ENCODE measurements at regions of chr12 and their contacts with region 1.

Region 1: GRCh38 chr12:28023156-28023887 is 50.8 kb upstream of the PTHLH start:
- DNase-seq: peak; percentile 97
- H3K4me3 ChIP-seq: no peak overlapping the region
- H3K27ac ChIP-seq: peak overlapping the region; percentile 100
- H3K4me1 ChIP-seq: peaks cover 64% of the 10 kb centered on the region
- H3K27me3 ChIP-seq: no peaks in the 10 kb centered on the region
- CTCF ChIP-seq: no peak

Region 2: GRCh38 chr12:27969624-27970400 is 53.5 kb before region 1 on chr12:
- CTCF ChIA-PET with region 1: no interaction called
- dilution Hi-C with region 1: loop called (anchors 5 kb)
- in situ Hi-C with region 1: loop called in 1 of 2 experiments (anchors 5 kb)
- intact Hi-C with region 1: loop called (anchors 1 kb)
- DNase-seq: peak; percentile 95
- H3K4me3 ChIP-seq: peak overlapping the region; percentile 76 to 95 (median 91)
- H3K27ac ChIP-seq: peak overlapping the region; percentile 100
- H3K4me1 ChIP-seq: peaks cover 42% of the 10 kb centered on the region
- H3K27me3 ChIP-seq: no peaks in the 10 kb centered on the region
- CTCF ChIP-seq: peak in 1 of 2 donors; percentile 53

Region 3: GRCh38 chr12:27981873-27982272 is 41.4 kb before region 1 on chr12:
- CTCF ChIA-PET with region 1: no interaction called
- dilution Hi-C with region 1: loop called (anchors 5 kb)
- in situ Hi-C with region 1: no loop called
- intact Hi-C with region 1: loop called (anchors 1 kb)
- DNase-seq: peak; percentile 98
- H3K4me3 ChIP-seq: no peak overlapping the region
- H3K27ac ChIP-seq: peak overlapping the region; percentile 98
- H3K4me1 ChIP-seq: peaks cover 28% of the 10 kb centered on the region
- H3K27me3 ChIP-seq: no peaks in the 10 kb centered on the region
- CTCF ChIP-seq: no peak

Region 4: GRCh38 chr12:28035500-28035899 is 12.2 kb after region 1 on chr12:
- CTCF ChIA-PET with region 1: no interaction called
- dilution Hi-C with region 1: no loop called
- in situ Hi-C with region 1: no loop called
- intact Hi-C with region 1: loop called (anchors 1 kb)
- DNase-seq: peak; percentile 78
- H3K4me3 ChIP-seq: no peak overlapping the region
- H3K27ac ChIP-seq: peak overlapping the region; percentile 100
- H3K4me1 ChIP-seq: peaks cover 40% of the 10 kb centered on the region
- H3K27me3 ChIP-seq: no peaks in the 10 kb centered on the region
- CTCF ChIP-seq: no peak

Region 5: DNA sequence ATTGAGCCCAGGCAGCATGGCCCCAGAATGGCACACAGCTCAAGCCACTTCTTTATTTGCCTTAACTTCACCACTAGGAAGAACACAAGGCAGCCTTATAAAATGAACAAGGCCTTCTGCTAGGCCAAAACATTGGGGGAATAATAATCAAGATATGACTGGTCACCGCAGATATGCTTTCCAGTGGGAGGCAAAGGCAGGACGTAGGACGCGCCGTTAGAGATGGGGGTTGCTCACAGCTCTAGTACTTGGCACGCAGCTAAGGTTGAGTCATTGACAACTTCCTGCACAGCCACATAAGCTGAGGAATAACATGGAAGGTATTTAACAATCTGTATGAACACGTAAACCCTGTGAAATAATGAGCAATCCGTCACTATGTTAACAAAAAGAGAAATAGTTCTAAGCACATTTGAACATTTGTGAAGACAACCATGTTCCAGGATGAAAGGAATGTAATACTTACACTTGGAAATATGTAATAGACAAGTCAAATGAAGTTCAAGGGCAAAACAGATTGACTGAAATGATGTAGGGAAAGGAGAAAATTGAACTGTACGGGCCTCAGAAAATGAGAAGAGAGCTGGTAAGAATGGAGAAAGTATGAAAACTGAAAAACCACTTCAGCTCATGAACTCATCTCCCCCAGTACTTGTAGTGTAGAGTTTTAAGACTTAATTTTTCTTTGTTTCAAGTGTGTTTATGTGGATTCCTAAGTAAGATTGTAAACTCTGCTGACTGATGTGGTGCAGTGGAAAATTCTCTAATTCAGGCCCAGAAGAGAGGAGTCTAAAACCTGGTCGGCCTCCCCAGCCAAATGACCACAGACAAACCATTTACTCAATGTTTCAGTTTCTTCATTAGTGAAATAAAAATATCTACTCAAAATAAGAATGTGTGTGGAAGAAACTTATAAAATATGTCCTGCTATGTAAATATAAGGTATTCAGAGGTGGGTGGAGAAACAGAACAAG is 107.6 kb after region 1 on chr12:
- CTCF ChIA-PET with region 1: interaction called, 3 read pairs
- dilution Hi-C with region 1: no loop called
- in situ Hi-C with region 1: no loop called
- intact Hi-C with region 1: loop called (anchors 1 kb)
- DNase-seq: peak; percentile 99
- H3K4me3 ChIP-seq: peak overlapping the region in 1 of 3 experiments; percentile 2
- H3K27ac ChIP-seq: peak overlapping the region; percentile 98
- H3K4me1 ChIP-seq: peaks cover 55% of the 10 kb centered on the region
- H3K27me3 ChIP-seq: no peaks in the 10 kb centered on the region
- CTCF ChIP-seq: no peak

Region 6: GRCh38 chr12:28190321-28191050 is 167.2 kb after region 1 on chr12 and contains the start of gene CCDC91:
- CTCF ChIA-PET with region 1: no interaction called
- dilution Hi-C with region 1: no loop called
- in situ Hi-C with region 1: no loop called
- intact Hi-C with region 1: loop called (anchors 1 kb)
- DNase-seq: peak; percentile 86
- H3K4me3 ChIP-seq: peak within 1 kb of the TSS; percentile 72 to 93 (median 88)
- H3K27ac ChIP-seq: peak within 1 kb of the TSS; percentile 96
- H3K4me1 ChIP-seq: peaks cover 16% of the 10 kb centered on the region
- H3K27me3 ChIP-seq: no peaks in the 10 kb centered on the region
- CTCF ChIP-seq: no peak
- total RNA-seq, gene CCDC91: 20.8 to 22.7 TPM

Measured in mammary epithelial cell (primary cell).